Caco-2 (cell line): ENCODE measurements at regions of chr20 and their contacts with region 1.

Region 1: DNA sequence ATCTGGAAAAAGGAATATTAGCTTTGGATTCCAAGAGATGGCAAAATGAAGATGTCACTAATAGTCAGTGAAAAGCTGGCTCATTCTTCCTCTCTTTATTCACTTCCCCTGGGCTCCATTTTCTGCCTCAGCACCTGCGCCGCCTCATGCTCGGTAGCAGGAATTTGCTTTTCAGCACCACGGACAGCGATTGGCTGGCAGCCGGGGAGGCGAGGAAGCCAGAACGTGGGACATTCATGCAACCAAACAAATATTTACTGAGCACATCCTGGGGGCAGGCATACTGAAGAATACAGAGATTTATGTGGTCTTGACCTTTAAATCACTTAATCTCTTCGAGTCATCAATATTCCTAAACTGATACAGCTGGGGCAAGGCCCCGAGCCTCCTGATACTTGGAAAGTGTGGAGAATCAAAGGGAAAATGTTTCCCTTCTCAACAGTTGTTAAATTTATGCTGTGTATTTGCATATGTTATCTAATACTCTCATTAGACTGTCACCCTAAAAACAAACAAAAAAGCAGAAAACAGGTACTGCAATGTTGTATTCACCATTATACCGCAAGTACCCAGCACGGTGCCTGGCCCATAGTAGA is 12.1 kb upstream of the PDYN start:
- DNase-seq: peak; percentile 75 to 89
- H3K4me3 ChIP-seq: no peak overlapping the region
- H3K4me3 Mint-ChIP-seq: no peak overlapping the region
- H3K27ac Mint-ChIP-seq: no peak overlapping the region
- H3K4me1 ChIP-seq: no peaks in the 10 kb centered on the region
- H3K4me1 Mint-ChIP-seq: no peaks in the 10 kb centered on the region
- H3K27me3 ChIP-seq: no peaks in the 10 kb centered on the region
- H3K27me3 Mint-ChIP-seq: peaks cover 12% of the 10 kb centered on the region
- CTCF ChIP-seq: no peak

Region 2: DNA sequence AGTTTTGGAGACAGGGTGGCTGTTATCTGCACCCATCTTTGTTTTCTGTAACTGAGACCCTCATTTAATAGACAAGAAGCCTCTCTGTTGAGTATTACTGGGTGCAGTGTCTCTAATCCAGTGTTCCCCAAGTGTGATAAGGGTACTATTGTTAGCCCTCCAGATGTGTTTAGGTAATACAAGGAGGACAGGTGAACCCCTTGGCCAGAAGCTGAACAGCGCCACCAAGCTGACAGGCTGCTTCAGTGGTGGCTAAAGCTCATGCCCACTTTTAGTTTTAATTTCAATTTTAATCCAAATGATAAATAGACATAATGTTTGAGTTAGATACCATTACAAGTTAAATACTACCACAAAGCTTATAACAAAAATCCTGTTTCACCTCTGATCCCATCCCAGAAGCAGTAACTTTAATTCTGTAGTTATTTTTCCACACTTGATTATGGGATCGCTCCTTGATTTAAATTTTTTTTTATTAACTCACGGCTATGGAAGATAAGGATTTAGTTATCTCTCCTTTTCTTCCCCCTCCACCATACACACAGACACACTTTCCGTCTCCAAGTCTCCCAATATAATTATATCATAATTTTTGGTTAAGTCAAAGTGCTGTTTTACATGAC is 87.3 kb after region 1 on chr20:
- CTCF ChIA-PET with region 1: interaction called, 5 read pairs
- POLR2A ChIA-PET with region 1: no interaction called
- intact Hi-C with region 1: loop called (anchors 2 kb)
- DNase-seq: peak; percentile 62 to 67
- H3K4me3 ChIP-seq: no peak overlapping the region
- H3K4me3 Mint-ChIP-seq: no peak overlapping the region
- H3K27ac Mint-ChIP-seq: no peak overlapping the region
- H3K4me1 ChIP-seq: no peaks in the 10 kb centered on the region
- H3K4me1 Mint-ChIP-seq: no peaks in the 10 kb centered on the region
- H3K27me3 ChIP-seq: no peaks in the 10 kb centered on the region; the same call in 1 of the 2 replicates
- H3K27me3 Mint-ChIP-seq: peaks cover 21% of the 10 kb centered on the region
- CTCF ChIP-seq: peak; percentile 69 to 89

Region 3: GRCh38 chr20:2109425-2110210 is 103.7 kb after region 1 on chr20:
- CTCF ChIA-PET with region 1: no interaction called
- POLR2A ChIA-PET with region 1: no interaction called
- intact Hi-C with region 1: no loop called
- DNase-seq: no peak
- H3K4me3 ChIP-seq: no peak overlapping the region
- H3K4me3 Mint-ChIP-seq: no peak overlapping the region
- H3K27ac Mint-ChIP-seq: peak overlapping the region; percentile 57
- H3K4me1 ChIP-seq: peaks cover 9% of the 10 kb centered on the region; the same call in 1 of the 2 replicates
- H3K4me1 Mint-ChIP-seq: peaks cover 21% of the 10 kb centered on the region
- H3K27me3 ChIP-seq: no peaks in the 10 kb centered on the region
- H3K27me3 Mint-ChIP-seq: no peaks in the 10 kb centered on the region
- CTCF ChIP-seq: no peak

Region 4: GRCh38 chr20:2914160-2914559 is 908.2 kb after region 1 on chr20:
- CTCF ChIA-PET with region 1: no interaction called
- POLR2A ChIA-PET with region 1: no interaction called
- intact Hi-C with region 1: no loop called
- DNase-seq: peak in 1 of 2 experiments; percentile 39
- H3K4me3 ChIP-seq: no peak overlapping the region
- H3K4me3 Mint-ChIP-seq: no peak overlapping the region
- H3K27ac Mint-ChIP-seq: no peak overlapping the region
- H3K4me1 ChIP-seq: peaks cover 17% of the 10 kb centered on the region
- H3K4me1 Mint-ChIP-seq: peaks cover under 1% of the 10 kb centered on the region
- H3K27me3 ChIP-seq: no peaks in the 10 kb centered on the region
- H3K27me3 Mint-ChIP-seq: no peaks in the 10 kb centered on the region
- CTCF ChIP-seq: peak; percentile 40 to 52